GM12878 (cell line): ENCODE measurements at regions of chr10 and their contacts with region 1.

Region 1: GRCh38 chr10:101693978-101694673 is 844 bp downstream of the FBXW4 start:
- DNase-seq: no peak
- ATAC-seq: peak; percentile 86
- H3K4me3 ChIP-seq: peak overlapping the region; percentile 98
- H3K27ac ChIP-seq: peak overlapping the region; percentile 91
- H3K4me1 ChIP-seq: peaks cover 13% of the 10 kb centered on the region
- H3K27me3 ChIP-seq: no peaks in the 10 kb centered on the region
- CTCF ChIP-seq: no peak
- EP300 ChIP-seq: no peak
- POLR2A ChIP-seq: peak; percentile 54
- RAD21 ChIP-seq: no peak

Region 2: GRCh38 chr10:101617102-101617823 is 76.9 kb before region 1 on chr10:
- CTCF ChIA-PET with region 1: interaction called, 11 read pairs
- POLR2A ChIA-PET with region 1: no interaction called
- RAD21 ChIA-PET with region 1: interaction called, 4 read pairs
- SMC1A ChIA-PET with region 1: interaction called, 4 read pairs
- in situ Hi-C with region 1: no loop called
- intact Hi-C with region 1: no loop called
- DNase-seq: peak; percentile 33
- ATAC-seq: peak; percentile 83
- H3K4me3 ChIP-seq: no peak overlapping the region
- H3K27ac ChIP-seq: peak overlapping the region; percentile 62
- H3K4me1 ChIP-seq: peaks cover 19% of the 10 kb centered on the region
- H3K27me3 ChIP-seq: no peaks in the 10 kb centered on the region
- CTCF ChIP-seq: peak; percentile 0 to 22 (median 16); a peak in 1 of 6 replicates
- EP300 ChIP-seq: peak; percentile 46 to 50; a peak in 2 of 4 replicates
- POLR2A ChIP-seq: 0 out of 2 replicates have a peak, but pooled peaks have one; percentile 6
- RAD21 ChIP-seq: no peak

Region 3: DNA sequence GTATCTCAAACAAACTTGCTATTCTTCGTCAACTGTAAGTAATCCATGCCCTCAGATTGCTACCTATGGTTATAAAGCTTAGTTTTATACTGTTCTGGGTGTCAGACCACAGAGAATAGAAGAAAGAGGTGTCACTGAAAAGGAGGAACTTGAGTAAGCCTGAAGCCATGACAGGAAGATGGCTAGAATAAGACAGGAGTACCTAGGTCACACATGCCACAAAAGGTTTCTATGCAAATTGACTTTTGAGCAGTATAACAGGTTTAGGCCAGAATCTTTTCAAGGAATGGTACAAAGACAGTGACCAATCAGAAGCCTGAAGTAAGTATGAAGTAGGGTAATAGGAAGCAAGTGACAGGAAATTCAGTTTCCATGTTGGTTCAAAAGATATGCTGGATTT is 22.7 kb before region 1 on chr10:
- CTCF ChIA-PET with region 1: interaction called, 10 read pairs
- POLR2A ChIA-PET with region 1: interaction called, 6 read pairs
- RAD21 ChIA-PET with region 1: interaction called, 9 read pairs
- SMC1A ChIA-PET with region 1: interaction called, 8 read pairs
- in situ Hi-C with region 1: no loop called
- intact Hi-C with region 1: no loop called
- DNase-seq: peak; percentile 60
- ATAC-seq: peak; percentile 91
- H3K4me3 ChIP-seq: no peak overlapping the region
- H3K27ac ChIP-seq: peak overlapping the region; percentile 78
- H3K4me1 ChIP-seq: peaks cover 26% of the 10 kb centered on the region
- H3K27me3 ChIP-seq: no peaks in the 10 kb centered on the region
- CTCF ChIP-seq: no peak
- EP300 ChIP-seq: no peak
- POLR2A ChIP-seq: no peak
- RAD21 ChIP-seq: no peak

Region 4: DNA sequence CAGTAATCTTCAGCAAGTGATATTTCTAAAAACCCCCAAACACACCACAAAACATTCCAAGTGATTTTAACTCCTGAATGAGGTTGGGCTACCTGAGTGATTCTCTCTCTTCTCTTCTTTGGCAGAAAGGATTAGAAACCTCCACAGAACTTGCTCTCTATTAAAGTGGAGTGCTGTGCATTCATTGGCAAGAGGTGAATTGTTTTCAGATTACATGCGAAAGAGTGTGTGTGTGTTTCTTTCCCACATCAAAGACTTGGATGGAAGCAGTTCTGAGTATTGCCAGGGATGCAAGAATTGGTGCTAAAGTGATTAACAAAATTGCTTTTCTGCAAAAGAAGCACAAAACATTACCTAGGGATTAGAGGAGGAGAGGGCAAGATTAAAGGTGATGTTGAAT is 13.9 kb after region 1 on chr10:
- CTCF ChIA-PET with region 1: interaction called, 9 read pairs
- POLR2A ChIA-PET with region 1: interaction called, 7 read pairs
- RAD21 ChIA-PET with region 1: interaction called, 9 read pairs
- SMC1A ChIA-PET with region 1: interaction called, 12 read pairs
- in situ Hi-C with region 1: no loop called
- intact Hi-C with region 1: no loop called
- DNase-seq: no peak
- ATAC-seq: no peak
- H3K4me3 ChIP-seq: no peak overlapping the region
- H3K27ac ChIP-seq: no peak overlapping the region
- H3K4me1 ChIP-seq: peaks cover 8% of the 10 kb centered on the region
- H3K27me3 ChIP-seq: no peaks in the 10 kb centered on the region
- CTCF ChIP-seq: no peak
- EP300 ChIP-seq: no peak
- POLR2A ChIP-seq: no peak
- RAD21 ChIP-seq: no peak